Activated B cell treated with CpG ODN at 0.5 μM for 24 hours (primary cell): ENCODE measurements at regions of chr4 and their contacts with region 1.

Region 1: GRCh38 chr4:159201168-159201567 is 98.3 kb downstream of the RAPGEF2 start:
- DNase-seq: no peak
- ATAC-seq: no peak
- H3K4me3 Mint-ChIP-seq: no peak overlapping the region
- H3K27ac Mint-ChIP-seq: no peak overlapping the region
- H3K4me1 Mint-ChIP-seq: peaks cover 18% of the 10 kb centered on the region
- H3K27me3 Mint-ChIP-seq: no peaks in the 10 kb centered on the region
- CTCF ChIP-seq: no peak

Region 2: DNA sequence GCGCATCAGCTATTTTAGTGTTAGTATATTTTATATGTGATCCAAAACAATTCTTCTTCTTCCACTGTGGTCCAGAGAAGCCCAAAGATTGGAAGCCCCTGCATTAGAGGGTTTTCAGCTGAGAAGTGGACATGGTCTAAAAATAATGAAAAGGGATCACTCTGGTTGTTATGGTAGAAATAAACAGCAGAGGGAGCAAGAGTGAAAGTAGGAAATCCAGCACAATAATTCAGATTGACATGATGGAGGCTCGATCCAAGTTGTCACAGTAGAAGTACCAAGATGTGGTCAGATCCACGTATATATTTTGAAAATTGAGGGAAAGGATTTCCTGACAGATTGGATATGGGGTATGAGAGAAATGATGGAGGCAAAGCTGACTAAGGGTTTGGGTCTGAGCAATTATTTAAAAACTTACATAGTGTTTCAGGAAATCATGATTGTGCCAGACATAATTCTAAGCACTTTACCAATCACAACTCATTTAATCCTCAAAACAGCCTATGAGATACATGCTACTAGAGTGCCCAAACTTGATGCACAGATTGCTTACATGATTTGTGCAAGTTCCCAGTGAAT is 1007.9 kb before region 1 on chr4:
- CTCF ChIA-PET with region 1: no interaction called
- POLR2A ChIA-PET with region 1: no interaction called
- intact Hi-C with region 1: loop called (anchors 5 kb)
- DNase-seq: no peak
- ATAC-seq: no peak
- H3K4me3 Mint-ChIP-seq: no peak overlapping the region
- H3K27ac Mint-ChIP-seq: no peak overlapping the region
- H3K4me1 Mint-ChIP-seq: no peaks in the 10 kb centered on the region
- H3K27me3 Mint-ChIP-seq: no peaks in the 10 kb centered on the region
- CTCF ChIP-seq: no peak